Left ventricle myocardium superior (tissue), 1 donor: ENCODE measurements at regions of chr5 and their contacts with region 1.

Region 1: DNA sequence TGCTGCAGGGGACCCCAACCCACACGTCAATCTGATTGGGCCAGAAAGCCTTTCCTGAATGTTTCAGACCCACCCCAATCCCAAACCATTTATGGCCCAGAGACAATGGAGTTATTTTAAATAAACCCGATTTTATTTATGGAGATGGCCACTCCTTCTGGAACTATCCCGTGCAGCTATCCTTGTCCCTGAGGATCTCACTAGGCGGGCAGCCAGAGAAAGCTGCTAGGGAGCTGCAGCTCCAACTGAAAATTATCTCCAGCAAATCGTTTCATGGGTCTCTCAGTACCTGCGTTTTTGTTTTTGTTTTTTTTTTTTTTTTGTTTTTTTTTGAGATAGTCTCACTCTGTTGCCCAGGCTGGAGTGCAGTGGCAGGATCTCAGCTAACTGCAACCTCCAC is 23.0 kb downstream of the C1QTNF2 start:
- DNase-seq: peak; percentile 59
- ATAC-seq: no peak

Region 2: GRCh38 chr5:159965031-159965837 is 382.2 kb before region 1 on chr5:
- intact Hi-C with region 1: no loop called
- DNase-seq: peak; percentile 75
- ATAC-seq: peak; percentile 85

Region 3: DNA sequence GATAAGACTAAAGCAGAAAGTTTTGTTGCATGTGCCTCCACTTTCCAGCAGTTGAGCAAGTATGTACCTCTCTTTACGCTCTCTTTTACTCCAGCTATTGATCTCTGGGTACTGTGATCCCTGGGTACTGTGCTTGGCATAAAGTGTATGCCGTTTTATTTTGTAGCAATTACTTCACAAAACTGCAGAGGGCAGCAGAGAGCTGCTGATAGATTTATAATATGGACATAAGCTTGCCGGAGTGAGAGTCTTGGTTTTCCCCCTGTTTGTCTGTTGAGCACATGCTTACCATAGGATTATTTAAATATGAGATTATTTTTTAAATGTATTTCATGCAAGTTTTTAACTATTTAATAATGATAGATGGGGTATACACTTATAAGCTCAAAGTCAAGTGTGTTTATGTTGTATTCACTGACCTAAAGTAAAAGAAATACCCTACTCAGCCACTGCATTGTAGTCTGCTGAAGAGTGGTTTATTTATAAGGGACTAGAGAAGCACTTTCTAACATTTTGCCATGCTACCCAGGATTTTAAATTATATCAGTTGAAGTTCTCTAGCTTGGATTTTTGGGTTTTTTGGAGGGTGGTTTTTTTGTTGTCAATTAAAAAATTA is 325.5 kb before region 1 on chr5:
- intact Hi-C with region 1: loop called (anchors 5 kb)
- DNase-seq: no peak
- ATAC-seq: peak; percentile 89

Region 4: GRCh38 chr5:160199410-160199911 is 148.0 kb before region 1 on chr5:
- intact Hi-C with region 1: loop called (anchors 5 kb)
- DNase-seq: peak; percentile 90
- ATAC-seq: peak; percentile 98